Vagina (tissue), 2 donors: ENCODE measurements at regions of chr9 and their contacts with region 1.

Region 1: DNA sequence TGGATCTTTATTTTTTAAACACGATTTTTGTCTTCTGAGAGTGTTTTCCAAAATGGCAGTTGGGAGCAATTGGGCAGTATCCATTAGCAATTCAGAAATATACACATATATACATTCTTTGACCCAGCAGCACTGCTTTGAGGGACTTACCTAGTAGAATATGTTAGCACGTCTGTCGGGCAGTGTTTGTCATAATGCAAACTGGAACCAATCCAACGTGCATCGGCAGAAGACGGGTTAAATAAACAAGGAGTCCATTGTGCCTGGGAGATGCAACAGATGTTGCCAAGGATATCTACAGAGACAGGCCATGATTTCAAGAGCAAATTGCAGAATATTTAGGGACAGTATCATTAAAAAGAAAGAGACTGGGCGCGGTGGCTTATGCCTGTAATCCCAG is 107.0 kb downstream of the COL5A1 start:
- DNase-seq: no peak
- H3K4me3 ChIP-seq: no peak overlapping the region
- H3K27ac ChIP-seq: no peak overlapping the region
- H3K4me1 ChIP-seq: no peaks in the 10 kb centered on the region
- H3K27me3 ChIP-seq: no peaks in the 10 kb centered on the region
- CTCF ChIP-seq: no peak
- POLR2A ChIP-seq: no peak

Region 2: DNA sequence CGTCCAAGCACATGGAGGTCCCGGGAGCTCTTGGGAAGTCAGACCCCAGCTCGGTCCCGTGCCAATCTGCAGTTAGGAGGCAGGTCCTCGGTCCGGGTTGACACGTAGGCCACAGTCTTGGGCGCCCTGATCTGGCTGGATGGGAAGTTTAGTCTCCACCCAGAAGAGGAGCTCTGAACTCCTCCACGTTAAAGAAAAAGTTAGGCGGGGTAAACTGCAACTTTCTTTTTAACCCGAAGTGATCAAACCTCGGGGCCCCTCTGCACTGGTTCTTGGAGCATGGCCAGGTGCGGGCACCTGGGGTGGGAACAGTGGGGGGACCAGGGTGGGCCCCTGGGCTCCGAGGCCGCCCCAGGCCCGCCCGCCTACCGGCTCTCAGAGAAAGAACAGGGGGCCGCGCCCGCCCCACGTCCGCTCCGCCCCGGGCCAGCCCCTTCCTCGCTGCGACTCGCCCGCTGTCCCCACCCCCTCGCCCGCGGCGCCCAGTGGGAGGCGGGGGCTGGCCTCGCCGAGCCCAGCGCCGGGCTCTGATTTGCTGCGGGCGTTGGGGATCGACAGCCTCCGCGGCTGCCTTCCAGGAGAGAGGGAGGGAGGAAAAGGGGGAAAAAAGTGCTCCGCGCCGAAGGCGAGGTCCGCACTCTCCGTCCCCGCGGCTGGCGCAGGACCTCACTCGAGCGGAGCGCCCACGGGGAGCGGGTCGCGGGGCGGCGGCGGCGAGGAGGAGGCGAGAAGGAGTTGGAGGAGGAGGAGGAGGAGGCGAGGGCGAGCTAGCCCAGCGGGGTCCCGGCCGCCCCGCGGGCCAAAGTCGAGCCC is 107.2 kb before region 1 on chr9 and contains the start of gene COL5A1:
- intact Hi-C with region 1: no loop called
- DNase-seq: no peak
- H3K4me3 ChIP-seq: peak within 1 kb of the TSS; percentile 66 to 95
- H3K27ac ChIP-seq: peak within 1 kb of the TSS; percentile 90
- H3K4me1 ChIP-seq: peaks cover 23% of the 10 kb centered on the region
- H3K27me3 ChIP-seq: no peaks in the 10 kb centered on the region
- CTCF ChIP-seq: peak in 1 of 3 experiments; percentile 49
- POLR2A ChIP-seq: peak in 1 of 2 donors; percentile 79
- total RNA-seq, gene COL5A1: 36.6 TPM

Region 3: DNA sequence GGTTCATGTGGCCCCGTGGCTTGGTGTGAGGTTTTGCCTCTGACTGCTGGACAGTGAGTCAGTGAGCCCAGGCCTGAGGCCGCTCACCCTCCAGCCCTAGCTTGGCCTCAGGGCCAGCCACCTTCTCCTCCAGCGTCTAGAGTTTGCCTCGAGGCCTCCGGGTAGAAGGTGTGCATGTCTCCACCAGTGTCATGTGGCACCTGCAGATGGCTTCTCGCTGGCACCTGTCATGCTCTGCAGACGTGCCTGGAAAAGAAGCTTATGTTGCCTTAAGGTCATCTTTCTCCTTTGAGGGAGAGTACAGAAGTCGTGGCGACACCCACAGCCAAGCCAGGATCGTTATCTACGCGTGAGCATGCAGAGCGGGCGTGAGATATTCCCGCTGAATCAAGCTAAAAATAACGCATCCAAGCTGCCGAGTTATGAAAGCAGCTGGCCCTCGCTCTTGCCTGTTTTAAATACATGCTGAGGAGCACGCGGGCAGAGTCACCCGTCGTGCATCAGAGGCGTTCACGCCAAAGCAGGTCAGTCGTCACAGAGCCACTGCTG is 52.3 kb after region 1 on chr9:
- intact Hi-C with region 1: no loop called
- DNase-seq: no peak
- H3K4me3 ChIP-seq: no peak overlapping the region
- H3K27ac ChIP-seq: no peak overlapping the region
- H3K4me1 ChIP-seq: peaks cover 7% of the 10 kb centered on the region
- H3K27me3 ChIP-seq: no peaks in the 10 kb centered on the region
- CTCF ChIP-seq: no peak
- POLR2A ChIP-seq: no peak

Region 4: DNA sequence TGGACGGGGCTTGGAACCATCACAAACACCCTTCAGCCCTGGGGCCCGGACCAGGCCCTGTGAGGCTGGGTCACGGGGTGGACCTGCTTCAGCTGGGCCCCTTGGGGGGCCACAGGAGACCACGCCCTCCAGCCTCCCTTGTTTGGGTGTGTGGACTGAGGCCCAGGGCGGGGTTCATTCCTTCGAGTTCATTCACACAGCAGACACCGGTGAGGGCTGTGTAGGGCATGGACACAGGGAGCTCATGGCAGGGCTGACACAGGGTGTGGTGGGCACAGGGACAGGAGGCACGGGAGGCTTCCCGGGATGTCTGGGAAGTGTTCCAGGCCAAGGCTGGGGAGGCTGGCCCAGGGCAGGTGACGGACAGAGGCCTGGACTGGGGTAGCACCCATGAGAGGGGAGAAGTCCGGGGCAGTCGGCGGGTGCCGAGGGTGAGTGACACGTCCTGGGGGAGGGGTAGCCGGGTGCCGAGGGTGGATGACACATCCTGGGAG is 1606.0 kb after region 1 on chr9:
- intact Hi-C with region 1: loop called (anchors 5 kb)
- DNase-seq: no peak
- H3K4me3 ChIP-seq: no peak overlapping the region
- H3K27ac ChIP-seq: peak overlapping the region; percentile 21
- H3K4me1 ChIP-seq: peaks cover 24% of the 10 kb centered on the region
- H3K27me3 ChIP-seq: no peaks in the 10 kb centered on the region
- CTCF ChIP-seq: no peak
- POLR2A ChIP-seq: no peak